CD4-positive, alpha-beta memory T cell (primary cell): ENCODE measurements at regions of chr12 and their contacts with region 1.

Region 1: GRCh38 chr12:50084775-50085614 is at the start of gene SMARCD1:
- DNase-seq: peak; percentile 77 to 88 (median 79)
- H3K4me3 ChIP-seq: peak within 1 kb of the TSS; percentile 73 to 97
- H3K4me3 Mint-ChIP-seq: peak within 1 kb of the TSS; percentile 92 to 96 (median 94)
- H3K27ac ChIP-seq: peak within 1 kb of the TSS; percentile 84
- H3K27ac Mint-ChIP-seq: peak within 1 kb of the TSS; percentile 93 to 99 (median 98)
- H3K4me1 ChIP-seq: peaks cover 27% of the 10 kb centered on the region
- H3K4me1 Mint-ChIP-seq: peaks cover 13 to 37% (median 27%) of the 10 kb centered on the region in 4 donors
- H3K27me3 ChIP-seq: no peaks in the 10 kb centered on the region
- H3K27me3 Mint-ChIP-seq: no peaks in the 10 kb centered on the region
- total RNA-seq, gene SMARCD1: 56.9 to 64.5 TPM

Region 2: GRCh38 chr12:50025187-50026059 is 59.6 kb before region 1 on chr12 and contains the start of gene RACGAP1:
- CTCF ChIA-PET with region 1: no interaction called
- POLR2A ChIA-PET with region 1: interaction called, 6 read pairs
- intact Hi-C with region 1: loop called (anchors 1 kb)
- DNase-seq: peak; percentile 95 to 98 (median 98)
- H3K4me3 ChIP-seq: peak within 1 kb of the TSS; percentile 48 to 62
- H3K4me3 Mint-ChIP-seq: peak within 1 kb of the TSS; percentile 95 to 100 (median 99)
- H3K27ac ChIP-seq: peak within 1 kb of the TSS; percentile 68
- H3K27ac Mint-ChIP-seq: peak within 1 kb of the TSS; percentile 79 to 97 (median 97)
- H3K4me1 ChIP-seq: peaks cover 10% of the 10 kb centered on the region
- H3K4me1 Mint-ChIP-seq: peaks cover 16 to 18% (median 17%) of the 10 kb centered on the region in 4 donors
- H3K27me3 ChIP-seq: no peaks in the 10 kb centered on the region
- H3K27me3 Mint-ChIP-seq: peaks cover 4 to 5% of the 10 kb centered on the region in 2 donors
- total RNA-seq, gene RACGAP1: 8.5 to 10.4 TPM

Region 3: DNA sequence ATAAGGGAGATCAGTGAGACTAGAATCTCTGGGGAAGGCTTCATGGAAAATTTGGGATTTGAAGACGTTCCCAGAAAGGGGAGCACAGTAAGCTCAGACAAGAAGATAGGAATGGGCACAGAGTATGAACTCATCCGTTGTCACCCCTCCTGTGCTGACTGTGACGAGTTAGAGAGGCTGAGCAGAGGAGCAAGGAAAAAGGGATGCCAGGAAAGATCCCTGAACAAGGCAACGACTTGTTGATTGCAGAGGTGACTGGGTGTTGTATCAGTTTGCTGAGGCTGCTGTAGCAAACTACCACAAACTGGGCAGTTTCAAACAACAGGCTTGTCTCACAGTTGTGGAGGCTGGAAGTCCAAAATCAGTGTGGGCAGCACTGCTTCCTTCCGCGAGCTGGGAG is 13.0 kb after region 1 on chr12:
- CTCF ChIA-PET with region 1: interaction called, 316 read pairs
- POLR2A ChIA-PET with region 1: no interaction called
- intact Hi-C with region 1: no loop called
- DNase-seq: no peak
- H3K4me3 ChIP-seq: no peak overlapping the region
- H3K4me3 Mint-ChIP-seq: no peak overlapping the region
- H3K27ac ChIP-seq: no peak overlapping the region
- H3K27ac Mint-ChIP-seq: peak overlapping the region in 1 of 7 donors; percentile 42
- H3K4me1 ChIP-seq: no peaks in the 10 kb centered on the region
- H3K4me1 Mint-ChIP-seq: peaks cover 0 to 1% (median 0%) of the 10 kb centered on the region in 4 donors
- H3K27me3 ChIP-seq: no peaks in the 10 kb centered on the region
- H3K27me3 Mint-ChIP-seq: no peaks in the 10 kb centered on the region

Region 4: GRCh38 chr12:50167041-50167828 is 82.2 kb after region 1 on chr12 and contains the start of gene CERS5:
- CTCF ChIA-PET with region 1: interaction called, 197 read pairs
- POLR2A ChIA-PET with region 1: interaction called, 33 read pairs
- intact Hi-C with region 1: loop called (anchors 1 kb)
- DNase-seq: peak; percentile 97 to 98 (median 97)
- H3K4me3 ChIP-seq: peak within 1 kb of the TSS; percentile 72 to 81
- H3K4me3 Mint-ChIP-seq: peak within 1 kb of the TSS; percentile 93 to 96 (median 94)
- H3K27ac ChIP-seq: peak within 1 kb of the TSS; percentile 90
- H3K27ac Mint-ChIP-seq: peak within 1 kb of the TSS; percentile 88 to 98 (median 96)
- H3K4me1 ChIP-seq: peaks cover 30% of the 10 kb centered on the region
- H3K4me1 Mint-ChIP-seq: peaks cover 19 to 34% (median 26%) of the 10 kb centered on the region in 4 donors
- H3K27me3 ChIP-seq: no peaks in the 10 kb centered on the region
- H3K27me3 Mint-ChIP-seq: no peaks in the 10 kb centered on the region
- total RNA-seq, gene CERS5: 42.1 to 48.2 TPM

Region 5: GRCh38 chr12:50174971-50175715 is 90.1 kb after region 1 on chr12:
- CTCF ChIA-PET with region 1: interaction called, 197 read pairs
- POLR2A ChIA-PET with region 1: interaction called, 7 read pairs
- intact Hi-C with region 1: loop called (anchors 1 kb)
- DNase-seq: peak; percentile 44 to 71 (median 64)
- H3K4me3 ChIP-seq: no peak overlapping the region
- H3K4me3 Mint-ChIP-seq: no peak overlapping the region
- H3K27ac ChIP-seq: no peak overlapping the region
- H3K27ac Mint-ChIP-seq: peak overlapping the region in 2 of 7 donors; percentile 13 to 49
- H3K4me1 ChIP-seq: no peaks in the 10 kb centered on the region
- H3K4me1 Mint-ChIP-seq: peaks cover 0 to 2% (median 0%) of the 10 kb centered on the region in 4 donors
- H3K27me3 ChIP-seq: no peaks in the 10 kb centered on the region
- H3K27me3 Mint-ChIP-seq: no peaks in the 10 kb centered on the region

Region 6: DNA sequence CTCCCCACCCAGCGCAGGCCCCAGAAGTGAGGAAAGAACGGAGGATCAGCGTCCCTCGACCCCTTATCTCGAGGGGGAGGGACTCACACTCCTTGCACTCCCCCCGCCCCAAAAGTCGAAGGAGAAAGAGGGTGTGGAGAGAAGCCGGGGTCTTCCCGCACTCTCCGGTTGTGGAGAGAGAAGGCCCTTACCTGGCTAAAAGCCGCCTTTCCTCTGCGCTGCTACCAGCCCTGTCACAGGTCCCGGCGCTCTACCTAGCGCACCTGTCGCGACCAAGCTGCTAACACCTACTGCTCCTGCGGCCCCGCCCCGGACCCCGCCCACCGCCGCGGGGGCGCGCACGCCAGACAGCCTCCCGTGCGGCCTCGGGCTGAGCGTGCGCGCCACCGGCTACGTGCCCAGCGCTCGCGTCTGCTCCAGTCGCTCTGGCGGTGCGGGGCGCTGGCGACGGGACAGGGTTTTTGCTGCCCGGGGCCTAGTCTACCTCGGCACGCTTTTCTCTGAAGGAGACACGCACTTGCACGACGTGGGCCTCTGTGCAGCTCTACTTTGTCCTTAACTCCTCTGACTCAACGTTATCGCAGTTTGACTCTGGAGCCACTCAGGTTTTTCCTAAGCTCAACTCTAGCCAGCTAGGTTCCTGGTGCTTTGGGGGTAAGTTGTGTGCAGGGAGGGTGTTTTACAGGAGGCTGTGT is 198.4 kb after region 1 on chr12 and contains the start of gene LIMA1:
- CTCF ChIA-PET with region 1: interaction called, 6 read pairs
- POLR2A ChIA-PET with region 1: interaction called, 13 read pairs
- intact Hi-C with region 1: no loop called
- DNase-seq: peak; percentile 91 to 93 (median 91)
- H3K4me3 ChIP-seq: peak within 1 kb of the TSS; percentile 58 to 61
- H3K4me3 Mint-ChIP-seq: peak within 1 kb of the TSS; percentile 91 to 96 (median 92)
- H3K27ac ChIP-seq: peak within 1 kb of the TSS; percentile 70
- H3K27ac Mint-ChIP-seq: peak within 1 kb of the TSS; percentile 38 to 95 (median 87)
- H3K4me1 ChIP-seq: peaks cover 17% of the 10 kb centered on the region
- H3K4me1 Mint-ChIP-seq: peaks cover 9 to 18% (median 14%) of the 10 kb centered on the region in 4 donors
- H3K27me3 ChIP-seq: no peaks in the 10 kb centered on the region
- H3K27me3 Mint-ChIP-seq: no peaks in the 10 kb centered on the region
- total RNA-seq, gene LIMA1: 11.5 to 14.9 TPM

Region 7: GRCh38 chr12:50400598-50401364 is 315.8 kb after region 1 on chr12 and contains the start of gene LARP4:
- CTCF ChIA-PET with region 1: no interaction called
- POLR2A ChIA-PET with region 1: no interaction called
- intact Hi-C with region 1: loop called (anchors 10 kb)
- DNase-seq: peak; percentile 90 to 94 (median 91)
- H3K4me3 ChIP-seq: peak within 1 kb of the TSS; percentile 63 to 90
- H3K4me3 Mint-ChIP-seq: peak within 1 kb of the TSS; percentile 91 to 99 (median 97)
- H3K27ac ChIP-seq: peak within 1 kb of the TSS; percentile 76
- H3K27ac Mint-ChIP-seq: peak within 1 kb of the TSS; percentile 89 to 98 (median 95)
- H3K4me1 ChIP-seq: peaks cover 28% of the 10 kb centered on the region
- H3K4me1 Mint-ChIP-seq: peaks cover 19 to 42% (median 30%) of the 10 kb centered on the region in 4 donors
- H3K27me3 ChIP-seq: no peaks in the 10 kb centered on the region
- H3K27me3 Mint-ChIP-seq: peaks cover 1 to 5% of the 10 kb centered on the region in 2 donors
- total RNA-seq, gene LARP4: 38.7 to 40.7 TPM